ENCODE measurements at regions of chr2 and their contacts with region 1.

Region 1: DNA sequence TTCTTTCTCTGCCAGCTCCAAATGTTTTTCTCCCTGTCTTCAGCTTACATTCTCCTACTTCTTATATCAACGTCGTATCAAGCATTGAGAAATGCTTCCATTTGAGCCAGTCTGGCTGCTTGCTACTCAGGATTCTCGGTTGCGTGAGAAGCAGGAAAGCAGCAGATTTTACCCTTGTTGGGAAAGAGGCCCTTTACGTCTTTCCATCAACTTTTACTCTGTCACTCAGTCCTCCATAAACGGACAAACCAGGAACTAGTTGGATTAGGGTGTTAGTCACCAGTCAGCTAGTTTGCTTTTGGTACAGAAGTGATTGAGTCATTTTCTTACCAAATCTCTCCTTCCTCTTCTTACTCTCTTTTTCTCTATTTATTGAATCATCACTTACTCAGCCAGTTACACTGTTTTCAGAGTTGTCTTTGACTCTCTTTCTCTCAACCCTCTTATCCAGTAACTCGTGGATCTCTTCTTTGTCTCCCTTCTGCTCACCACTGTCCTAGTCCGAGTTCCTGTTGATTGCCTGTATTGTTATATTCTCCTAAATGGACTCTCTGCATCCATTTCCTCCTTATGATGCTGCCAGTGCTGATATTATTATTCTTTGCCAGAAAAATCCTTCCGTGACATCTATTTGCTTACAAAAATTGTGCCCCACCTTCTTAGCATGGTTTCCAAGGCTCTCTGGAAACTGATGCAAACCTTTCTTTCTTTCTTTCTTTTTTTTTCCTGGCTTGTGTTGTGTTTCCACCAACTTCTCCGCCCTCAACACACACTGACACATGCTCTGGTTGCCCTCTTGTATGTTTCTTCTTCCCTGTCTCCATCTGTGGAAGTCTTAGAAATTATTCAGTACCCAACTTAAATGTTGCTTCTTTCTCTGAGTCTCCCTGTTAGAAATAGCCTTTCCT is 61.5 kb downstream of the VRK2 start:
- DNase-seq: no peak

Region 2: GRCh38 chr2:57842531-57842930 is 265.5 kb before region 1 on chr2:
- intact Hi-C with region 1: no loop called
- DNase-seq: no peak

Region 3: GRCh38 chr2:58046585-58047372 is 61.3 kb before region 1 on chr2 and contains the start of gene VRK2:
- intact Hi-C with region 1: loop called (anchors 10 kb)
- DNase-seq: peak; percentile 20 to 93 (median 44)

Region 4: DNA sequence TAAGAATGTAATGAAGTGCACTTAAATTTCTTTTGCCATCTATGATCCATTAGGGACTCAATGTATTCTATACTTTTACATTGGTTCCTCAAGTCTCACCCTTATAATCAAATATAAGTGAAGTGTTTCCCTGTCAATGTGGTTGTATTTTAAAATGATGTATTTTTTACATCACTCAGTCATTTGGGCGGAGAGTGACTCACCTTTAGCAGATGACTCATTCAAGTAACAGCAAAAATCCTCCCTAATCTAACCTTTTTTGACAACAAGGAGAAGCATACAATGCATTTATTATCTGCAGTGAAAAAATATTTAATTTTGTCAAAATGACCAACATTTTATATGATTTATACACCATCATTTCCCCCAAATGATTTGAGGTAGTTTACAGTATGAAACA is 38.6 kb after region 1 on chr2:
- intact Hi-C with region 1: no loop called
- DNase-seq: no peak